Activated naive CD4-positive, alpha-beta T cell treated with anti-CD3 and anti-CD28 coated beads, Interleukin-2, amount 10 ng/mL, durations not matched to agents 7 days and 5 days (primary cell): ENCODE measurements at regions of chr2 and their contacts with region 1.

Region 1: DNA sequence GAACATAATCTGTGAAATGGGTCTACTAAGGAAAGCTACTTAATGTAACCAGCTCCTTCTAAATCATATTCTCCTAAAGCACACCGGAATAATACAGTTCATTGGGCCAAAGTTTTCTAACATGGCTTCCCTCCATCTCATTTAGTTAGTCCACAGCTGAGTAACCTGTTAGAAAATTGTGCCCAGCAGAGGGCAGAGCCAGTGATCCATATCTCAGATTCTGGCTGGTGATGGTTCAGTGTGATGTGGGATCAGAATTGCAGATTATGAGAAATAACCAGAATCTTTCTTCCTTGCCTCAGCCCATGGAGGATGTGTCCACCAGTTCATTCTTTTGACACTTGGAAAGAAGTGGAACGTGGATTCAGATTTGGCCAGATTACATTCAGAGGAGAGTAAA is 9.4 kb upstream of the CTLA4 start:
- DNase-seq: peak; percentile 45
- H3K4me3 Mint-ChIP-seq: no peak overlapping the region
- H3K27ac Mint-ChIP-seq: peak overlapping the region; percentile 65
- H3K4me1 Mint-ChIP-seq: peaks cover 64% of the 10 kb centered on the region
- H3K27me3 Mint-ChIP-seq: no peaks in the 10 kb centered on the region

Region 2: GRCh38 chr2:203846490-203847105 is 11.6 kb before region 1 on chr2:
- CTCF ChIA-PET with region 1: no interaction called
- DNase-seq: no peak
- H3K4me3 Mint-ChIP-seq: no peak overlapping the region
- H3K27ac Mint-ChIP-seq: no peak overlapping the region
- H3K4me1 Mint-ChIP-seq: no peaks in the 10 kb centered on the region
- H3K27me3 Mint-ChIP-seq: no peaks in the 10 kb centered on the region

Region 3: GRCh38 chr2:203871371-203871983 is 13.3 kb after region 1 on chr2:
- CTCF ChIA-PET with region 1: interaction called, 25 read pairs
- DNase-seq: peak; percentile 57
- H3K4me3 Mint-ChIP-seq: peak overlapping the region; percentile 83
- H3K27ac Mint-ChIP-seq: peak overlapping the region; percentile 98
- H3K4me1 Mint-ChIP-seq: peaks cover 86% of the 10 kb centered on the region
- H3K27me3 Mint-ChIP-seq: no peaks in the 10 kb centered on the region

Region 4: GRCh38 chr2:203909261-203909967 is 51.2 kb after region 1 on chr2:
- CTCF ChIA-PET with region 1: interaction called, 22 read pairs
- DNase-seq: peak; percentile 45
- H3K4me3 Mint-ChIP-seq: peak overlapping the region; percentile 5
- H3K27ac Mint-ChIP-seq: no peak overlapping the region
- H3K4me1 Mint-ChIP-seq: peaks cover 19% of the 10 kb centered on the region
- H3K27me3 Mint-ChIP-seq: peaks cover 4% of the 10 kb centered on the region